Heart right ventricle (tissue), 16 donors: ENCODE measurements at regions of chr2 and their contacts with region 1.

Region 1: GRCh38 chr2:86764661-86765307 is 25.9 kb downstream of the CD8A start:
- DNase-seq: no peak
- ATAC-seq: peak in 4 of 8 donors; percentile 38 to 63 (median 52)
- H3K4me3 ChIP-seq: no peak overlapping the region
- H3K27ac ChIP-seq: no peak overlapping the region
- H3K4me1 ChIP-seq: peaks cover 9 to 57% (median 25%) of the 10 kb centered on the region in 9 donors
- H3K27me3 ChIP-seq: no peaks in the 10 kb centered on the region
- CTCF ChIP-seq: peak; percentile 55 to 82 (median 69)

Region 2: GRCh38 chr2:86518481-86518880 is 246.3 kb before region 1 on chr2:
- intact Hi-C with region 1: loop called in 1 of 10 experiments (anchors 10 kb)
- DNase-seq: peak in 1 of 2 donors; percentile 36
- ATAC-seq: peak in 7 of 8 donors; percentile 60 to 74 (median 72)
- H3K4me3 ChIP-seq: no peak overlapping the region
- H3K27ac ChIP-seq: no peak overlapping the region
- H3K4me1 ChIP-seq: peaks cover 0 to 13% (median 0%) of the 10 kb centered on the region in 9 donors
- H3K27me3 ChIP-seq: no peaks in the 10 kb centered on the region
- CTCF ChIP-seq: peak; percentile 17 to 65 (median 47)

Region 3: GRCh38 chr2:86636842-86637241 is 127.9 kb before region 1 on chr2:
- intact Hi-C with region 1: no loop called
- DNase-seq: no peak
- ATAC-seq: no peak
- H3K4me3 ChIP-seq: no peak overlapping the region
- H3K27ac ChIP-seq: no peak overlapping the region
- H3K4me1 ChIP-seq: peaks cover 0 to 20% (median 0%) of the 10 kb centered on the region in 9 donors
- H3K27me3 ChIP-seq: no peaks in the 10 kb centered on the region
- CTCF ChIP-seq: no peak

Region 4: GRCh38 chr2:86808315-86809161 is 43.8 kb after region 1 on chr2:
- intact Hi-C with region 1: loop called in 1 of 10 experiments (anchors 5 kb)
- DNase-seq: peak; percentile 84 to 86
- ATAC-seq: peak; percentile 92 to 97 (median 96)
- H3K4me3 ChIP-seq: peak overlapping the region in 9 of 10 donors; percentile 26 to 56 (median 52)
- H3K27ac ChIP-seq: peak overlapping the region in 1 of 10 donors; percentile 67
- H3K4me1 ChIP-seq: peaks cover 2 to 30% (median 19%) of the 10 kb centered on the region in 9 donors
- H3K27me3 ChIP-seq: peaks cover 0 to 59% (median 45%) of the 10 kb centered on the region in 7 donors
- CTCF ChIP-seq: peak; percentile 80 to 94 (median 89)